ENCODE measurements at regions of chr6 and their contacts with region 1.

Region 1: GRCh38 chr6:43174263-43175112 is 3.4 kb downstream of the SRF start:
- DNase-seq: peak; percentile 99
- H3K4me3 Mint-ChIP-seq: peak overlapping the region; percentile 90
- H3K27ac Mint-ChIP-seq: peak overlapping the region; percentile 80
- H3K4me1 Mint-ChIP-seq: peaks cover 36% of the 10 kb centered on the region
- H3K27me3 Mint-ChIP-seq: no peaks in the 10 kb centered on the region

Region 2: DNA sequence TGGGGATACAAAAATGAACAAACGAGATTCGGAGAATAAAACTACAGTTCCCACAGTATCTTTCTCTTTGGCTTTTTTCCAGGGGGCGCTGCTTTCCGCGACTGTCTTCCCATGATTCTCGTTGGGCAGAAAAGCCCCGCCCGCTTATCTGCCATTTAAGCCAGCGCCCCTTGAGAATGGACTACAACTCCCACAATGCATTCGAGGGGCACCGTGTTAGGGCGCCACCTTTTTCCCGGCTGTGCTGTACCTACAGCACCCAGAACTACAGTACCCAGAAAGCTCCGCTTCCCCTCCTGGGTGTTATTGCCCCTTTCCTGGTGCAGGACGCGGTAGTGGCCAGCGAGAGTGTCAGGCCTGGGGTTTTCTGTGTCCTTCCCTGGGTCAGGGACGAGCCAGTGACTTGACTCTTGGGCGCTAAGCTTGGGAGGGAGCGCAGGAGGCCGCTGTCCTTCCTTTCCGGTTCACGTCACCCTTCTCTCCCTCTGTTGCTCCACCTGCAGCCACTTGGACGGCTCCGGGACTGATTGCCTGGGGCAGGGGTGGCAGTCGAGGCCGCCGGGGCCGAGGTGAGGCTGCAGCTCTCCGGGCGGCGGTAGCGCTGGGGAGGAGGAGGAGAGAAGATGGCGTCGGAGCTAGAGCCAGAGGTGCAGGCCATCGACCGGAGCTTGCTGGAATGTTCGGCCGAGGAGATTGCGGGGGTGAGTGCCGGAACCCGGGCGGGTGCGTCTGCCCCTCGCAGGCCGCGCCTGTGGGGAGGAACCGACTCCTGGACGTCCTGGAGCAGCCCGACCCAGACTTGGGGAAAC is 610.6 kb before region 1 on chr6 and contains the start of gene UBR2:
- CTCF ChIA-PET with region 1: no interaction called
- intact Hi-C with region 1: loop called (anchors 1 kb)
- DNase-seq: peak; percentile 98
- H3K4me3 Mint-ChIP-seq: peak within 1 kb of the TSS; percentile 97
- H3K27ac Mint-ChIP-seq: peak within 1 kb of the TSS; percentile 92
- H3K4me1 Mint-ChIP-seq: peaks cover 26% of the 10 kb centered on the region
- H3K27me3 Mint-ChIP-seq: no peaks in the 10 kb centered on the region
- total RNA-seq, gene UBR2: 23.1 to 23.5 TPM

Region 3: DNA sequence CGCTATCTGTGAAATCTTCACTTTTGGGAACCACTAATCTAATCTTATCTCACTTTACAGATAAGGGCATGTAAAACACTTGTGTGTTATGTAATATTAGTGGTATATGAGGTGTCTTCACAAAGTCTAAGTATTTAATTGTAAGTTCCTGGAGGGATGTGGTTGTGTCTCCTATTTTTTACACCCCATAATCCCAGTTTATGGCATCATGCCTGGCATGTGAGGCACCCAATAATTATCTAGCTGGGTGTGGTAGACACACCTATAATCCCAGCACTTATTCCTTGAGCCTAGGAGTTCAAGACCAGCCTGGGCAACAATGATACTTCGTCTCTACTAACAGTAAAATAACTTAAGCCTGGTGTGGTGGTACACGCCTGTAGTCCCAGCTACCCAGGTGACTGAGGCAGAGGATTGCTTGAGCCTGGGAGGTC is 412.0 kb before region 1 on chr6:
- CTCF ChIA-PET with region 1: no interaction called
- intact Hi-C with region 1: no loop called
- DNase-seq: no peak
- H3K4me3 Mint-ChIP-seq: no peak overlapping the region
- H3K27ac Mint-ChIP-seq: no peak overlapping the region
- H3K4me1 Mint-ChIP-seq: peaks cover 6% of the 10 kb centered on the region
- H3K27me3 Mint-ChIP-seq: no peaks in the 10 kb centered on the region

Region 4: DNA sequence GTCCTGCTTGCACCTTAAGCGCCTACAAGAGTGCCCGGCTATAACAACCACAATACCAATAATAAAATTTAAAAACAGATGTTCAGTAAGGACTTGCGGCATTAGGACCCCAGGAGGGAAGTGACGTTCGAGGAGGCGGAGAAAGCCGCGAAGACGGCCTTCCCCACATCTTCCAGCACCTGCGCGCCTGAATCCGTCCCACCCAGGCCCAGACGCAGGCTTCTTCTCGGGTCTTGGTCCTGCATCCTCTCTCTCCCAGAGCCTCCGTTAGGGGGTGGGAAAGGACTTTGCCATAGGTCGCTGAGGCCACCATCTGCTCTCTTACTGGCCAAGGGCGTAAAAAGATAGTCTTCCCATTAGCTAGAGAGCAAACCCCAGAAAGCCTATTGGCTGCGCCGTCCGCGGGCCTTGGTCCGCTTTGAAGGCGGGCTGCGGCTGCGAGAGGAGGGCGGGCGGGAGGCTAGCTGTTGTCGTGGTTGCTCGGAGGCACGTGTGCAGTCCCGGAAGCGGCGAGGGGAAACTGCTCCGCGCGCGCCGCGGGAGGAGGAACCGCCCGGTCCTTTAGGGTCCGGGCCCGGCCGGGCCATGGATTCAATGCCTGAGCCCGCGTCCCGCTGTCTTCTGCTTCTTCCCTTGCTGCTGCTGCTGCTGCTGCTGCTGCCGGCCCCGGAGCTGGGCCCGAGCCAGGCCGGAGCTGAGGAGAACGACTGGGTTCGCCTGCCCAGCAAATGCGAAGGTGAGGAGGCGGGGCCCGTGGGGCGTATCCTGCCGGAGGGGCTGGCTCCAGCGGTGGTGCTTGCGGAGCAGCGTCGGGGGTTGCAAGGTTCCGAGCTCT is 245.3 kb before region 1 on chr6 and contains the start of gene CNPY3:
- CTCF ChIA-PET with region 1: no interaction called
- intact Hi-C with region 1: loop called (anchors 1 kb)
- DNase-seq: peak; percentile 98
- H3K4me3 Mint-ChIP-seq: peak within 1 kb of the TSS; percentile 100
- H3K27ac Mint-ChIP-seq: peak within 1 kb of the TSS; percentile 100
- H3K4me1 Mint-ChIP-seq: peaks cover 40% of the 10 kb centered on the region
- H3K27me3 Mint-ChIP-seq: no peaks in the 10 kb centered on the region
- total RNA-seq, gene CNPY3: 37.6 to 41.0 TPM

Region 5: DNA sequence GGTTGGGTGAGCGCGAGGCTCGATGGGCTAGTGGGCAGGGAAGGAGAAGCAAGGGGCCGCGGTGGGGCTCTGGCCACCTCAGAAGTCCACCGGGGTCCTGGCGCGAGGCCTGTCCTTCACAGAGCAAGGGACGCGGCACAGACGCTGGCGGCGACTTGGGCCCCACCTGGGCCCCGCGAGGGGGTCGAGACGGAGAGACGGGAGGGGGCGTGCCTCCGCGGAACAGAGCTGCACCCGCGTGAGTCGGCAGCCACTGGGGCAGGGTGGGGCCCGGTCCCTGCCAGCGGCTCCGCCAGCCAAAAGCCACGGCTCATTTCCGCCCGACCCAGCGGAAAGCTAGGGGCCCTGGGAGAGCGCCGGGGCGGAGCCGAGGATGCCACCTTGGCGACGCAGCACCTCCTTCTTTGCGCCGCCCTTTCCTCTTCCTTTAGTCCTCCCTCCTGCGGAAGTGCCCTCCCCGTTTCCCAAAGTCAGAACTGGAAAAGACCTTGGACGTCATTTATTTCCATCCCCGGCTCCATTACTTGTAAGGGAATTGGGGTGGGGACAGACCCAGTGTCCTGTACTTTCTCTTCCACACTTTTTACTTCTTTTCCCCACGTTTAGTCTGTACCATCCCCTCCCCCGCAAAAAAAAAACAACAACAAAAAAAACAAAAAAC is 120.8 kb before region 1 on chr6 and contains the start of gene CUL7:
- CTCF ChIA-PET with region 1: no interaction called
- intact Hi-C with region 1: loop called (anchors 1 kb)
- DNase-seq: peak; percentile 96
- H3K4me3 Mint-ChIP-seq: peak within 1 kb of the TSS; percentile 99
- H3K27ac Mint-ChIP-seq: peak within 1 kb of the TSS; percentile 90
- H3K4me1 Mint-ChIP-seq: peaks cover 39% of the 10 kb centered on the region
- H3K27me3 Mint-ChIP-seq: no peaks in the 10 kb centered on the region
- total RNA-seq, gene CUL7: 21.9 to 22.1 TPM

Region 6: DNA sequence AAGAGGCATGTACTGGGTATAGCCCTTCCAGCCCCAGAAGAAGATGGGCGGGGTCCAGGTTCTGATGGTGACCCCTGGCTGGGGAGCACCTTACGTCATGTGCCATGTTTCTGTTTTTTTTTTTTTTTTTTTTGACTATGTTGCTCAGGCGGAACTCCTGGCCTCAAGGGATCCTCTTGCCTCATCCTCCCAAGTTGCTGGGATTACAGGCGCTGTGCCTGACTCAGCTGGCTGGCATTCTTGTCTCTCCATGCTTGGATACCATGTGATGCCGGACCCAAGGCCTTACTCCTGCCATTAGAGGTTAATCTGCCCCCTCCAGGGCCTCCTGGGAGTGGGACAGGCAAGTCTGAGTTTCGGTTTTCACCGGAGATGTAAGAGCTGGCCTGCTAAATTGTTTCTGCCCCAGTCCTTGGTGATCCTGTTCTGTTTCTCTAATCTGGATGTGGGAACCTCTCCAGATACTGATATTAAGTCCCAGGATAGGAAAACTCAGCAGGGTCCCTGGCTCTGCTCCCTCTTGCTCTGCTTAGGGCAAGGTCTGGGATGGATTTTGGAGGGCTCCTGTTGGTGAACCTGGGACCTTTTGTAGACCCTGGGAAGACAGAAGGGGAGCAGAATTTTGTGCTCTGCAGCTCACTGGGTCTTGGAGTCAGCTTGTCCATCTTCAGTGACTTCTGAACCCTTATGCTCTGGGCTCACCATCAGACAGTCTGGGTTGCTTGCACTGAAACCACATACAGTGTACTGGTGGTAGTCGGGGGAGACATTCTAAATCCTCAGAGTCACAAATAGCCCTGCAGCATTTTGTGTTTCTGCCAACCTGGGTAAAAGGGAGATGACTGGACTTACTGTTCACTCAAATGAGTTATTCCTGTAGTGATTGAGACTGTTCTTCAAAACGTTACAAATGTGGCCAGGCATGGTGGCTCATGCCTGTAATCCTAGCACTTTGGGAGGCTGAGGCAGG is 53.3 kb before region 1 on chr6:
- CTCF ChIA-PET with region 1: no interaction called
- intact Hi-C with region 1: no loop called
- DNase-seq: no peak
- H3K4me3 Mint-ChIP-seq: no peak overlapping the region
- H3K27ac Mint-ChIP-seq: no peak overlapping the region
- H3K4me1 Mint-ChIP-seq: no peaks in the 10 kb centered on the region
- H3K27me3 Mint-ChIP-seq: no peaks in the 10 kb centered on the region

Region 7: DNA sequence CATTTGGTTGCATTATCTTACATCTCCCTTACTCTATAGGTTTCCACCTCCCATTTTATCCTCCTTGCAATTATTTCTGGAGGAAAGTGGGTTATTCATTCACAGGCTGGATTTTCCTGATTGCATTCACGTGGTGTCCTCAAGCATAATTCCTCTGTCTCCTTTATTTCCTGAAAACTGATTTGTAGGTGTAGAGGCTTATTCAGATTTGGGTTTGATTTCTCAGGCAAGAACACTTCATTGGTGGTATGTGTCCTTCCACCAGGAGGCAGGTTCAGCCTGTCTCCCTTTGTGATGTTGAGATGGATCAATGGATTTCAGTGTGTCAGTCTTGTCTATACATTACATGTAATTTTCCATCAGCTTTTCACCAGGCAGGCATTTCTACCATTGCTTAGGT is 37.5 kb after region 1 on chr6:
- CTCF ChIA-PET with region 1: no interaction called
- intact Hi-C with region 1: no loop called
- DNase-seq: no peak
- H3K4me3 Mint-ChIP-seq: no peak overlapping the region
- H3K27ac Mint-ChIP-seq: no peak overlapping the region
- H3K4me1 Mint-ChIP-seq: no peaks in the 10 kb centered on the region
- H3K27me3 Mint-ChIP-seq: no peaks in the 10 kb centered on the region

Region 8: DNA sequence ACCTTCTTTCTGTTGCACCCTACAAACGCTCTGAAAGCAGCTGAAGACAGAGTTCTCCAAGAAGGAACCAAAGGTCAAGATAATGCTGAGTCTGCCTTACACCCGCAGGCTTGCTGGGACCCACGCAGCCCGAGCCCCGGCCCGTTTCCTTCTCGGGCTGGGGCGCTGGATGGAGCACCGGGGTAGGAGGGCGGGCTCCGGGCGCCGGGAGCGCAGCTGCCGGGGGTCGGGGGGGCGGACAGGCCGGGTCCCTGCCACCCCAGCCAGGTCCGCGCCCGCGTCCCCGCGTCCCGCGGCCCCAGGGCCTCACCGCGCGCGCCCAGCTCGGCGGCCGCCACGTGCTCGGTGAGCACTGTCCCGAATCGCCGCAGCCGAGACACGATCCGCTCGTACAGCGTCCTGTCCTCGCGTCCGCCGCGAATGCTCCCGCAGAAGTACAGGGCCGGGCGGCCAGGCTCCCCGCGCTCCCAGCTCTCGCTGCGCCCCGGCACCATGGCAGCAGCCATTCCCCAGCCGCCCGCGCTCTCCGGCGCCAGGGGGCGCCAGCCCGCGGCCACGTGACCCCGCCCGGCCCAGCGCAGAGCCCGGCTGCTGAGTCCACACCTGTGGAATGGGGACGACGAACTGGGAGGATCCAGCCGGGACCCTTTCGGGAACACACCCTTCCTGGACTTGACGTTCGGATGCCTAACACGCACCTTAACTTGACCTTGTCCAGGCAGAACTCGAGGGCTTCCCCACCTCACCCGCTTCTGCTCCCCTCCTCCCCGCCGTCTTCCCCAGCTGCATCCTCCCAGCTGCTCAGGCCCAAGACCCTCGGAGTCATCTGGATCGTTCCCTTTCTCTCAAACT is 54.7 kb after region 1 on chr6 and contains the start of gene DNPH1:
- CTCF ChIA-PET with region 1: interaction called, 3 read pairs
- intact Hi-C with region 1: loop called (anchors 1 kb)
- DNase-seq: peak; percentile 79
- H3K4me3 Mint-ChIP-seq: peak within 1 kb of the TSS; percentile 90
- H3K27ac Mint-ChIP-seq: peak within 1 kb of the TSS; percentile 89
- H3K4me1 Mint-ChIP-seq: peaks cover 41% of the 10 kb centered on the region
- H3K27me3 Mint-ChIP-seq: no peaks in the 10 kb centered on the region
- total RNA-seq, gene DNPH1: 59.7 to 59.8 TPM

Region 9: DNA sequence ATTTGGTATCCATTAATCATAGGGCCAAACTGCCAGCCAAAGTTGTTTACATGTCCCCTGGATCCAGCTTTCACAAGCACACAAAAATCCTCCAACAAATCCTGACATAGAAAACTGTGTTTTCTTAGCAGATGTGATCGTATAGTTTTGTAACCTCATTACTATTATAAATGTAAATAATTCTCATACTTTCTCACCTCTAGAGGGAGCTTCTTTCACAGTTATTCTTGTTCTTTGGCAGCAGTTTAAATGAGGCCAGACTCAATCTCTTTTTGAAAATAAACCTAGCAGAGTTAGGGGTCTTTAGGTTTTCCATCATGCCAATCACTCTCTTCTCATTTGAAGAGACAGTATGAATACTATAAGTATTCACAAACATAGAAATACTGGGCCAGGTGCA is 212.0 kb after region 1 on chr6:
- CTCF ChIA-PET with region 1: no interaction called
- intact Hi-C with region 1: loop called (anchors 1 kb)
- DNase-seq: no peak
- H3K4me3 Mint-ChIP-seq: no peak overlapping the region
- H3K27ac Mint-ChIP-seq: no peak overlapping the region
- H3K4me1 Mint-ChIP-seq: peaks cover 50% of the 10 kb centered on the region
- H3K27me3 Mint-ChIP-seq: peaks cover 3% of the 10 kb centered on the region

Region 10: GRCh38 chr6:43506667-43507471 is 332.4 kb after region 1 on chr6:
- CTCF ChIA-PET with region 1: no interaction called
- intact Hi-C with region 1: no loop called
- DNase-seq: peak; percentile 89
- H3K4me3 Mint-ChIP-seq: no peak overlapping the region
- H3K27ac Mint-ChIP-seq: no peak overlapping the region
- H3K4me1 Mint-ChIP-seq: peaks cover 5% of the 10 kb centered on the region
- H3K27me3 Mint-ChIP-seq: peaks cover 14% of the 10 kb centered on the region

Region 11: GRCh38 chr6:43516697-43517504 is 342.4 kb after region 1 on chr6 and contains the starts of genes POLR1C and YIPF3:
- CTCF ChIA-PET with region 1: no interaction called
- intact Hi-C with region 1: loop called (anchors 2 kb)
- DNase-seq: peak; percentile 99
- H3K4me3 Mint-ChIP-seq: no peak within 1 kb of the TSS
- H3K27ac Mint-ChIP-seq: no peak within 1 kb of the TSS
- H3K4me1 Mint-ChIP-seq: peaks cover 28% of the 10 kb centered on the region
- H3K27me3 Mint-ChIP-seq: no peaks in the 10 kb centered on the region
- total RNA-seq, gene POLR1C: 47.5 to 50.1 TPM
- total RNA-seq, gene YIPF3: 26.2 to 26.5 TPM